CD4-positive, alpha-beta memory T cell (primary cell): ENCODE measurements at regions of chr20 and their contacts with region 1.

Region 1: GRCh38 chr20:57622579-57623377 is 2.6 kb upstream of the ZBP1 start:
- DNase-seq: peak; percentile 64 to 77 (median 66)
- H3K4me3 ChIP-seq: no peak overlapping the region
- H3K4me3 Mint-ChIP-seq: peak overlapping the region in 6 of 8 donors; percentile 66 to 90 (median 74)
- H3K27ac ChIP-seq: no peak overlapping the region
- H3K27ac Mint-ChIP-seq: peak overlapping the region; percentile 88 to 96 (median 91)
- H3K4me1 ChIP-seq: peaks cover 76% of the 10 kb centered on the region
- H3K4me1 Mint-ChIP-seq: peaks cover 30 to 91% (median 65%) of the 10 kb centered on the region in 4 donors
- H3K27me3 ChIP-seq: no peaks in the 10 kb centered on the region
- H3K27me3 Mint-ChIP-seq: no peaks in the 10 kb centered on the region

Region 2: DNA sequence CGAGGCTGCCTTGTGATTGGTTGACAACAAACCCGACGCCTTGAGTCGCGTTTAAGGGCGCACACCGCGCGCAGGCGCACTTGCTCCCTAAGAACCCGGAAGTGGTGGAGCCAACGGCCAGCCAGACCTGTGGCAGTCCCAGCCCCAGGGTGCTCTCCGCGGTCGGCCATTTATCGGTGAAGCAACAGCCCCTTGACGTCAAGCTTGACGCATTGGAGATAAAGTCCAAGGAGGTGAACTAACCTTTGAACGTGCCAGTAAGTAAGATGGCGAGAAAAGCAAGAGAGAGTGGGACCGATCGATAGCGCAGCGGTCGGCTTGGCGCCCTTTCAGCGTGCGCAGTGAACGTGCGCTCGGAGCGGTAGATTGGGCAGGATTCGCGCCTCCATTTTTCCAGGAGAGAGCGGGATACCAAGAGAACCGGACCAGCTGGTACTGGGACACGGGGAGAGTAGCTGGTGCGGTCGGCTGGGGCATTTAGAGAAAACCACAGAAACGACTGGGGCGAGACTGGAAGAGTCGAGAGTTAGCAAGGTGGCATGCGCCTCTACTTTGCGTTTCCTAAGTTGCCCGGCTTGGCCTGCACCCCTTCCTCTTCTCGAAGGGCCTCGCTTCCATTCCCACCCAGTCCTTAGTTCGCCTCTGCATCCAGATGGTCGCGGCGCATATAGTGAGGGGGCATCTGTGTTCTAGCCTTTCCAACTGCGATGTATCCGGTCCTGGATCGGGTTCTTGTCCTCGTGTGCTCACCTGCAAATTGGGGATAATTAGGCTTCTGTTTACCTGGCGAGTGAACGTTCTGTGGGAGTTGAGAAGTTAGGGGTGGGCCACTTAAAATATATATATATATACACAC is 1230.3 kb before region 1 on chr20 and contains the start of gene CSTF1:
- CTCF ChIA-PET with region 1: no interaction called
- POLR2A ChIA-PET with region 1: no interaction called
- intact Hi-C with region 1: loop called (anchors 10 kb)
- DNase-seq: peak; percentile 99 to 100 (median 99)
- H3K4me3 ChIP-seq: peak within 1 kb of the TSS; percentile 100
- H3K4me3 Mint-ChIP-seq: no peak within 1 kb of the TSS
- H3K27ac ChIP-seq: peak within 1 kb of the TSS; percentile 91
- H3K27ac Mint-ChIP-seq: peak within 1 kb of the TSS in 1 of 7 donors; percentile 96
- H3K4me1 ChIP-seq: peaks cover 34% of the 10 kb centered on the region
- H3K4me1 Mint-ChIP-seq: peaks cover 25 to 28% (median 28%) of the 10 kb centered on the region in 4 donors
- H3K27me3 ChIP-seq: no peaks in the 10 kb centered on the region
- H3K27me3 Mint-ChIP-seq: no peaks in the 10 kb centered on the region
- total RNA-seq, gene CSTF1: 50.1 to 55.3 TPM

Region 3: GRCh38 chr20:57596998-57597939 is 25.5 kb before region 1 on chr20:
- CTCF ChIA-PET with region 1: interaction called, 111 read pairs
- POLR2A ChIA-PET with region 1: interaction called, 9 read pairs
- intact Hi-C with region 1: no loop called
- DNase-seq: peak; percentile 61 to 75 (median 70)
- H3K4me3 ChIP-seq: no peak overlapping the region
- H3K4me3 Mint-ChIP-seq: peak overlapping the region in 2 of 8 donors; percentile 16 to 36
- H3K27ac ChIP-seq: no peak overlapping the region
- H3K27ac Mint-ChIP-seq: peak overlapping the region in 1 of 7 donors; percentile 29
- H3K4me1 ChIP-seq: peaks cover 3% of the 10 kb centered on the region
- H3K4me1 Mint-ChIP-seq: peaks cover 0 to 8% (median 5%) of the 10 kb centered on the region in 4 donors
- H3K27me3 ChIP-seq: no peaks in the 10 kb centered on the region
- H3K27me3 Mint-ChIP-seq: peaks cover 3 to 4% of the 10 kb centered on the region in 2 donors

Region 4: DNA sequence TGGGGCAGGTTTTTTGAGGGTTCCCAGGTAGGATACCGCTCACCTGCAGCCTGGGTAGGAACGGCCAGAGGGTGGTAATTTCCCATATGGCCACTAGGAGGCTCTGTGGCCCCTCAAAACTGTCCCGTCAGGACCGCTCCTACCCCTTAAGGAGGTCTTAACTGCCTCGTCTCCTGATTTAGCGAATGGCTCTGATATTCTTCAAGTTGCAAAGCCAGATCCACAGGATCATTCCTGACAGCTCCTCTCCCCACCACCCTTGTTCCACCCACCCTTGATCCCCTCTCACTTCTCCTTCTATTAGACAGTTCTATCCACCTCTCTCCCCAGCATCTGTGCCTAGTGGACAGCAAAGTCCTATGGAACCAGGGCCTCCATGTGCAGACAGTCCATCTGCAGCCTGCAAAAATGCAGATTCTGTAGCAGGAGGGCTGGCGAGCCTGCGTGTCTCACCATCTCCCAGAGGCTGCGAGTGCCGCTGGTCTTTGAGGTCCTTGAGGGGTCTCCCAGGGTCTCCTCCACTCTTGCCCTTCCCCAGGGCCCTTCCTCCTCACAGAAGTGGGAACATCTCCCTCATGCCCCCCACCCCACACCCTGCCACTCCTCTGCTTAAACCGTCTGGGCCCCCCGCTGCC is 31.7 kb after region 1 on chr20:
- CTCF ChIA-PET with region 1: interaction called, 42 read pairs
- POLR2A ChIA-PET with region 1: interaction called, 9 read pairs
- intact Hi-C with region 1: loop called (anchors 2 kb)
- DNase-seq: peak in 4 of 5 donors; percentile 45 to 55 (median 50)
- H3K4me3 ChIP-seq: no peak overlapping the region
- H3K4me3 Mint-ChIP-seq: peak overlapping the region in 2 of 8 donors; percentile 6 to 39
- H3K27ac ChIP-seq: no peak overlapping the region
- H3K27ac Mint-ChIP-seq: peak overlapping the region in 2 of 7 donors; percentile 76 to 80
- H3K4me1 ChIP-seq: peaks cover 17% of the 10 kb centered on the region
- H3K4me1 Mint-ChIP-seq: peaks cover 13 to 29% (median 21%) of the 10 kb centered on the region in 4 donors
- H3K27me3 ChIP-seq: no peaks in the 10 kb centered on the region
- H3K27me3 Mint-ChIP-seq: peaks cover 0 to 3% of the 10 kb centered on the region in 2 donors

Region 5: DNA sequence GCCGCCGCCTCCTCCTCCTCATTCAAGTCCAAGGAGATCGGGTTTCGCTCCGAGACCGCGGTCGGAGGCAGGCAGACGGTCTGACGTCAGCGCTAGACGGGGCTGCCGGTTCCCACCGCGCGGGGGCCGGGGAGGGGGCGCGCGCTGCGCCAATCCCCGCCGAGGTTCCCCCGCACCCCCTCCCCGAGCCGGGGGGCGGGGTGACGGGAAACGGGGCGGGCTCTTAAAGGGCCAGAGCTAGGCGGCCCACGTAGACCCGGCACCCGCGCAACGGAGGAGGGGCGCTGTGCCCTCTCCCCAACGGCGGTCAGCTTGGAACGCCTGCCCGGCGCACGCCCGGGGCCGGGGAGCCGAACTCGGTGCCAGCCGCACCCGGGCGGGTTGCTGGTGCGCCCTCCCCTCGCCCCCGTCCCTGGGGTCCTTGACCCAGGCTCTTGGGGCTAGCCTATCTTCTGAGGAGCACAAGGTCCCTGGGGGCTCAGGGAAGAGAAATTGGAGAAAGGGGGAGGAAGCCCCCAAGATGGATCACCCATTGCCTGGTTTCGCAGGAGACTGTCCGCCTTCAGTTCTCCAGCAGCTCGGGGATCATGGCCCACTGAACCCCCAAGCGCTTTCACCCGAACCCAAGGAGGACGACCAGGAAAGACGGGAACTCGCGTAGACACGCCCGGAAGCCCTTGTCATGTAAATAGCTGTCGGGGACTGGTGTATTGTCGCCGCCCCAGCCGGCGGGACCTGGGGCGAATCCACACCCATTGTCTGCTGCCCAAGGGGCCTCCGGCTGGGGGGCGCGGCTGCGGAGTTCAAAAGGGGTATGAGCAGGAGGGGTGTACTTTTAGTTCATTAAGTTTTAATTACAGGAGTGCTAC is 87.4 kb after region 1 on chr20 and contains the start of gene PMEPA1:
- CTCF ChIA-PET with region 1: interaction called, 11 read pairs
- POLR2A ChIA-PET with region 1: interaction called, 47 read pairs
- intact Hi-C with region 1: loop called (anchors 1 kb)
- DNase-seq: peak; percentile 91 to 96 (median 92)
- H3K4me3 ChIP-seq: peak within 1 kb of the TSS; percentile 81 to 87
- H3K4me3 Mint-ChIP-seq: peak within 1 kb of the TSS; percentile 87 to 94 (median 91)
- H3K27ac ChIP-seq: peak within 1 kb of the TSS; percentile 67
- H3K27ac Mint-ChIP-seq: peak within 1 kb of the TSS; percentile 92 to 98 (median 96)
- H3K4me1 ChIP-seq: peaks cover 17% of the 10 kb centered on the region
- H3K4me1 Mint-ChIP-seq: peaks cover 16 to 47% (median 27%) of the 10 kb centered on the region in 4 donors
- H3K27me3 ChIP-seq: no peaks in the 10 kb centered on the region
- H3K27me3 Mint-ChIP-seq: peaks cover 3 to 10% of the 10 kb centered on the region in 2 donors
- total RNA-seq, gene PMEPA1: 8.1 to 8.9 TPM

Region 6: DNA sequence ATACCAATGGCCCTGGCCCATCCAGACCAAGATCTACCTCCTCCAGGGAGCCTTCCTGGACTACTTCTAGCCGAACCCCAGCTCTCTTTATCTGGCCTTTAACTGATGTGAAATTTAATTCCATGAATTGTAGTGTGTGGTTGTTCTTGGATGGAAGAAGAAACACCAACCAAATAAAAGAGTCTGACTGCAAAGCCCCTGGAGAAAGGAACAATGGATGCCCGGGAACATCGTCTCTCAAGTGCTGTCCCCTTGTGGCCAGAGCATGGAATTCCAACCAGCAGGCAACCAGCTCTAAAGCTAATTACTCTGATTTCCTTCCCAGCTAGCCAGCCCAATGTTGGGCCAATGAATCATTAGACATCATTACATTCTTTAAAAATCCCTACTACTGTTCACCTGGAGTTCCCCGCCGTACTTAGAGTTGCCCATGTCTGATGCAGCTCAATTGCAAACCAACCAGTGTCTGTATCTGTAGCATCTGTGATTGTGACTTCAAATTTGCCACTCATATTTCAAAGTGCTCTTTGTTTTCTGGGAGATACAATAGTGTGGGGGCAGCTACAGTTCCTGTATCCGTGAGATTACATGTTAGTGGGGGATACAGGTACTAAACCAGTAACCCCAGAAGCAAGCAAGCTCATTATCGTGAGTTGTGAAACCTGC is 464.5 kb after region 1 on chr20:
- CTCF ChIA-PET with region 1: interaction called, 16 read pairs
- POLR2A ChIA-PET with region 1: interaction called, 3 read pairs
- intact Hi-C with region 1: no loop called
- DNase-seq: peak in 1 of 5 donors; percentile 4
- H3K4me3 ChIP-seq: no peak overlapping the region
- H3K4me3 Mint-ChIP-seq: no peak overlapping the region
- H3K27ac ChIP-seq: no peak overlapping the region
- H3K27ac Mint-ChIP-seq: no peak overlapping the region
- H3K4me1 ChIP-seq: no peaks in the 10 kb centered on the region
- H3K4me1 Mint-ChIP-seq: no peaks in the 10 kb centered on the region
- H3K27me3 ChIP-seq: no peaks in the 10 kb centered on the region
- H3K27me3 Mint-ChIP-seq: peaks cover 0 to 14% of the 10 kb centered on the region in 2 donors

Region 7: GRCh38 chr20:58309575-58310290 is 687.0 kb after region 1 on chr20 and contains the start of gene RAB22A:
- CTCF ChIA-PET with region 1: no interaction called
- POLR2A ChIA-PET with region 1: no interaction called
- intact Hi-C with region 1: loop called (anchors 10 kb)
- DNase-seq: peak; percentile 77 to 88 (median 83)
- H3K4me3 ChIP-seq: peak within 1 kb of the TSS; percentile 62 to 72
- H3K4me3 Mint-ChIP-seq: peak within 1 kb of the TSS; percentile 88 to 98 (median 94)
- H3K27ac ChIP-seq: peak within 1 kb of the TSS; percentile 87
- H3K27ac Mint-ChIP-seq: peak within 1 kb of the TSS; percentile 95 to 99 (median 99)
- H3K4me1 ChIP-seq: peaks cover 68% of the 10 kb centered on the region
- H3K4me1 Mint-ChIP-seq: peaks cover 40 to 71% (median 56%) of the 10 kb centered on the region in 4 donors
- H3K27me3 ChIP-seq: no peaks in the 10 kb centered on the region
- H3K27me3 Mint-ChIP-seq: no peaks in the 10 kb centered on the region
- total RNA-seq, gene RAB22A: 23.6 TPM